ENCODE measurements at regions of chr1 and their contacts with region 1.

Region 1: GRCh38 chr1:241895013-241895412 is 47.0 kb downstream of the EXO1 start:
- DNase-seq: no peak
- ATAC-seq: no peak
- H3K4me3 ChIP-seq: no peak overlapping the region
- H3K27ac ChIP-seq: no peak overlapping the region
- H3K4me1 ChIP-seq: no peaks in the 10 kb centered on the region
- H3K27me3 ChIP-seq: no peaks in the 10 kb centered on the region
- CTCF ChIP-seq: no peak
- EP300 ChIP-seq: no peak
- POLR2A ChIP-seq: no peak
- RAD21 ChIP-seq: no peak

Region 2: GRCh38 chr1:241972703-241973369 is 77.8 kb after region 1 on chr1:
- CTCF ChIA-PET with region 1: no interaction called
- POLR2A ChIA-PET with region 1: no interaction called
- in situ Hi-C with region 1: no loop called
- intact Hi-C with region 1: no loop called
- DNase-seq: peak; percentile 28
- ATAC-seq: peak; percentile 42; the same call in 1 of the 3 replicates
- H3K4me3 ChIP-seq: no peak overlapping the region
- H3K27ac ChIP-seq: no peak overlapping the region
- H3K4me1 ChIP-seq: no peaks in the 10 kb centered on the region
- H3K27me3 ChIP-seq: no peaks in the 10 kb centered on the region
- CTCF ChIP-seq: no peak
- EP300 ChIP-seq: no peak
- POLR2A ChIP-seq: no peak
- RAD21 ChIP-seq: no peak

Region 3: GRCh38 chr1:241985787-241986186 is 90.8 kb after region 1 on chr1:
- CTCF ChIA-PET with region 1: interaction called, 26 read pairs
- POLR2A ChIA-PET with region 1: no interaction called
- in situ Hi-C with region 1: loop called (anchors 5 kb)
- intact Hi-C with region 1: loop called (anchors 1 kb)
- DNase-seq: peak; percentile 47
- ATAC-seq: peak; percentile 87
- H3K4me3 ChIP-seq: no peak overlapping the region
- H3K27ac ChIP-seq: no peak overlapping the region
- H3K4me1 ChIP-seq: no peaks in the 10 kb centered on the region
- H3K27me3 ChIP-seq: no peaks in the 10 kb centered on the region; a peak in 2 of 5 replicates
- CTCF ChIP-seq: peak; percentile 67
- EP300 ChIP-seq: no peak
- POLR2A ChIP-seq: no peak
- RAD21 ChIP-seq: no peak

Region 4: GRCh38 chr1:241998412-241998921 is 103.5 kb after region 1 on chr1:
- CTCF ChIA-PET with region 1: interaction called, 23 read pairs
- POLR2A ChIA-PET with region 1: no interaction called
- in situ Hi-C with region 1: no loop called
- intact Hi-C with region 1: no loop called
- DNase-seq: peak; percentile 23
- ATAC-seq: peak; percentile 93
- H3K4me3 ChIP-seq: peak overlapping the region in 2 of 3 experiments; percentile 24 to 53; a peak in 3 of 6 replicates
- H3K27ac ChIP-seq: no peak overlapping the region
- H3K4me1 ChIP-seq: no peaks in the 10 kb centered on the region
- H3K27me3 ChIP-seq: peaks cover 0 to 8% of the 10 kb centered on the region in 2 experiments; a peak in 1 of 5 replicates
- CTCF ChIP-seq: peak; percentile 72
- EP300 ChIP-seq: no peak
- POLR2A ChIP-seq: no peak
- RAD21 ChIP-seq: no peak

Region 5: DNA sequence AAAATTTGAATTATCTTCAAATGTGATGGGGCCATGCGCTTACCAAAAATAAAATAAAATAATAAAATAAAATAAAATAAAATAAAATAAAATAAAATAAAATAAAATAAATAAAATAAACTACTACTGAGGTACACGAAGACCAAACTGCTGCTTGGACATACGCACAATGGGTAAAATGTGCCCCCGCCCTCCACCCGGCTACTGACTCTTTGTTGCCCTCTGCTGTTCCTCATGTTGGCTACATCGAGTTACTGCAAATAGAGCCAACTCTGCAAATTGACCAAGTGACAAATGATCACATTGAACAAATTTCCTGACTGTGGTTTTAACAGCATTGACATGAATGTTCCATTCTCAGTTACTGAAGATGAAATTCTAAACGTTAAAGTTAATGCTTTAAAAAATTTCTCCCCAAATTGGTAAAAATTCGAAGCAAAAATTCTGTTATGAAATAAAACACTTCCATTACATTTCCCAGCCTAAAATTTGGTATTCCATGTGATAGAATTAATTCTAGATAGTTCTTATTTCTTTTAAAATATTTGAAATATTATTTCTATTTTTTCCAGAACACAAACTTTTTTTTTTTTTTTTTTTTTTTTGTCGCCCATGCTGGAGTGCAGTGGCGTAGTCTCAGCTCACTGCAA is 122.7 kb after region 1 on chr1:
- CTCF ChIA-PET with region 1: interaction called, 9 read pairs
- POLR2A ChIA-PET with region 1: no interaction called
- in situ Hi-C with region 1: no loop called
- intact Hi-C with region 1: loop called (anchors 1 kb)
- DNase-seq: peak; percentile 47
- ATAC-seq: peak; percentile 73
- H3K4me3 ChIP-seq: no peak overlapping the region
- H3K27ac ChIP-seq: no peak overlapping the region
- H3K4me1 ChIP-seq: no peaks in the 10 kb centered on the region
- H3K27me3 ChIP-seq: no peaks in the 10 kb centered on the region; a peak in 1 of 5 replicates
- CTCF ChIP-seq: peak; percentile 70
- EP300 ChIP-seq: no peak
- POLR2A ChIP-seq: no peak
- RAD21 ChIP-seq: no peak

Measured in HepG2 (cell line).